Esophagus muscularis mucosa (tissue), 4 donors: ENCODE measurements at regions of chr20 and their contacts with region 1.

Region 1: DNA sequence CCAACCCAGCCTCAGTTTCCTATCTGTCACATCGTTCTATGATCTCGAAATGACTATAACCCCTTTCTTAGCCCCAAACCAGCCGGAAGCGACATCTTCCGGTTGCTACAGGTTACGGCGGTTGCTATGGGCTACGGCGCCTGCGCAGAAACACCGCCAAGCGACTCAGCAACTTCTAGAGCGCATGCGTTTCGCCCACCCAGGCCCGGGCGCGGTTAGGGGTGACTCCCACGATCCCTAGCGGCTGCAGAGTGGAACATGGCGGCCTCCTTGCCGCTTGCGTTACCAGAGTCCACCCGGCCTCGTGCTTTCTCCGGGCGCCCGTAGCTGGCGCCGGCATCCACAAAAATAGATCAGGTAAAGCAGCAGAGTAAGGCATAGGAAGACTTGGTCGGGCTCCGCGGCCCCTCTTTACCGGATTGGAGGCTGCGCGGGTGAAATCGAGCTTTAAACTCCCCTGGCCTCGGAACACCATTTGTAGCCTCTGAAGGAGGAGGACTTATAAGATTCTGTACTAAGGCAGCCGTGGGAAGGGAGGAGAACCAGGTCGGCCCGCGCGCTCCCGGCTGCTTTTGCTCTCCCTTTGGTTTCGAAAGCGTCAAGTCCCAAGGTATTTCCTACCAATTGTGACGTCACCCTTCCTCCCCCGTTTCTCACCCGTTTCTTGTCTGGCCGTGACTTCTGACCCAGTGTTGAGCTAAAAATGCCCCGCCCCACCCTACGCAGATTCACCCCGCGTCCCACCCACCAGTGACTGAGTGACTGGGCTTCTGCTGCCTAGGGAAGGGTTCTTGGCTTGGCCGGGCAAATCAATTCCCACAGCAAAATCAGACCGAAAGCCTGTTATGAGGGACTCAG is 3.5 kb downstream of the SDCBP2 start:
- DNase-seq: peak; percentile 99
- H3K4me3 ChIP-seq: peak overlapping the region; percentile 70 to 89 (median 78)
- H3K27ac ChIP-seq: peak overlapping the region; percentile 93 to 99 (median 96)
- H3K4me1 ChIP-seq: peaks cover 59 to 74% (median 66%) of the 10 kb centered on the region in 4 donors
- H3K27me3 ChIP-seq: peaks cover 0 to 9% (median 0%) of the 10 kb centered on the region in 4 donors
- CTCF ChIP-seq: peak in 2 of 3 experiments; percentile 25 to 40
- EP300 ChIP-seq: no peak
- POLR2A ChIP-seq: peak; percentile 94

Region 2: GRCh38 chr20:1392823-1393506 is 67.6 kb after region 1 on chr20 and contains the start of gene FKBP1A:
- intact Hi-C with region 1: loop called (anchors 2 kb)
- DNase-seq: peak; percentile 96
- H3K4me3 ChIP-seq: peak within 1 kb of the TSS; percentile 73 to 98 (median 80)
- H3K27ac ChIP-seq: peak within 1 kb of the TSS; percentile 79 to 89 (median 84)
- H3K4me1 ChIP-seq: peaks cover 40 to 53% (median 51%) of the 10 kb centered on the region in 4 donors
- H3K27me3 ChIP-seq: peaks cover 0 to 12% (median 0%) of the 10 kb centered on the region in 4 donors
- CTCF ChIP-seq: peak in 2 of 3 experiments; percentile 23 to 29
- EP300 ChIP-seq: no peak
- POLR2A ChIP-seq: peak; percentile 48
- total RNA-seq, gene FKBP1A: 84.3 to 99.2 (median 89.8) TPM